ENCODE measurements at regions of chr5 and their contacts with region 1.

Region 1: GRCh38 chr5:79133657-79134451 is 22.2 kb downstream of the BHMT start:
- DNase-seq: peak; percentile 76
- ATAC-seq: peak; percentile 79
- H3K4me3 Mint-ChIP-seq: peak overlapping the region; percentile 73
- H3K27ac Mint-ChIP-seq: peak overlapping the region; percentile 94
- H3K4me1 Mint-ChIP-seq: peaks cover 23% of the 10 kb centered on the region
- H3K27me3 Mint-ChIP-seq: no peaks in the 10 kb centered on the region
- CTCF ChIP-seq: peak; percentile 24; the same call in 1 of the 2 replicates

Region 2: DNA sequence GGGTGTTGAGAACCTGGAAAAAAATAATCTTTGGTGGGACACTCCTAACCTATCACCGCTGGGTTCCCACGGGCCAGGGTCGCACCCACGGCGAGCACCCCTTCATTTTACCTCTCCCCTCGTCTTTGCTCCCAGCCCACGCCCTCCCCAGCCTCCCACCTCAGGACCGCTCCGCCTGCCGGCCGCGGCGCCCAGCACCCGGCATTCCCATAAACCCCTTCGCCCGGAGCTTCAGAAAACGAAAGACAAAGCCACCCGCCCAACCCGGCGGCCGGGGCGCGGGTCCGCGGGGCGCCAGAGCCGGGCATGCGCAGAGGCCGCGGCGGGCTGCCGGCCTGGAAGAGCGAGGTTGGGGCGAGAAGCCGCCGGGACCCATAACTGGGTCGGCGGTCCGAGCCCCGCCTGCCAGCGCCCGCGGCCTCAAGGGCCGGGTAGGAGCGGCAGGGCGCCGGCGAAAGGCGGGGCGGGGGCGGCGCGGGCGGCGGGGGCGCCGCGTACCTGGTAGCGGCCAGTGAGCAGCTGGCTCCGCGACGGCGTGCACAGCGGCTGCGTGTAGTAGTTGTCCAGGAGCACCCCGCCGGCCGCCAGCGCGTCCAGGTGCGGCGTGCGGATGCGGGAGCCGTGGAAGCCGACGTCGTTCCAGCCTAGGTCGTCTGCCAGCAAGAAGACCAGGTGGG is 149.3 kb before region 1 on chr5:
- CTCF ChIA-PET with region 1: interaction called, 11 read pairs
- POLR2A ChIA-PET with region 1: no interaction called
- DNase-seq: peak; percentile 84
- ATAC-seq: peak; percentile 92
- H3K4me3 Mint-ChIP-seq: peak overlapping the region; percentile 75
- H3K27ac Mint-ChIP-seq: peak overlapping the region; percentile 92; the same call in 1 of the 2 replicates
- H3K4me1 Mint-ChIP-seq: peaks cover 28% of the 10 kb centered on the region
- H3K27me3 Mint-ChIP-seq: peaks cover 10% of the 10 kb centered on the region
- CTCF ChIP-seq: no peak

Region 3: GRCh38 chr5:79001471-79001870 is 132.4 kb before region 1 on chr5:
- CTCF ChIA-PET with region 1: no interaction called
- POLR2A ChIA-PET with region 1: no interaction called
- DNase-seq: no peak
- ATAC-seq: no peak
- H3K4me3 Mint-ChIP-seq: no peak overlapping the region
- H3K27ac Mint-ChIP-seq: no peak overlapping the region
- H3K4me1 Mint-ChIP-seq: no peaks in the 10 kb centered on the region
- H3K27me3 Mint-ChIP-seq: no peaks in the 10 kb centered on the region
- CTCF ChIP-seq: no peak

Region 4: GRCh38 chr5:79030663-79031484 is 103.0 kb before region 1 on chr5:
- CTCF ChIA-PET with region 1: interaction called, 358 read pairs
- POLR2A ChIA-PET with region 1: no interaction called
- DNase-seq: no peak
- ATAC-seq: no peak
- H3K4me3 Mint-ChIP-seq: no peak overlapping the region
- H3K27ac Mint-ChIP-seq: no peak overlapping the region
- H3K4me1 Mint-ChIP-seq: no peaks in the 10 kb centered on the region
- H3K27me3 Mint-ChIP-seq: no peaks in the 10 kb centered on the region; the same call in 1 of the 2 replicates
- CTCF ChIP-seq: no peak

Region 5: DNA sequence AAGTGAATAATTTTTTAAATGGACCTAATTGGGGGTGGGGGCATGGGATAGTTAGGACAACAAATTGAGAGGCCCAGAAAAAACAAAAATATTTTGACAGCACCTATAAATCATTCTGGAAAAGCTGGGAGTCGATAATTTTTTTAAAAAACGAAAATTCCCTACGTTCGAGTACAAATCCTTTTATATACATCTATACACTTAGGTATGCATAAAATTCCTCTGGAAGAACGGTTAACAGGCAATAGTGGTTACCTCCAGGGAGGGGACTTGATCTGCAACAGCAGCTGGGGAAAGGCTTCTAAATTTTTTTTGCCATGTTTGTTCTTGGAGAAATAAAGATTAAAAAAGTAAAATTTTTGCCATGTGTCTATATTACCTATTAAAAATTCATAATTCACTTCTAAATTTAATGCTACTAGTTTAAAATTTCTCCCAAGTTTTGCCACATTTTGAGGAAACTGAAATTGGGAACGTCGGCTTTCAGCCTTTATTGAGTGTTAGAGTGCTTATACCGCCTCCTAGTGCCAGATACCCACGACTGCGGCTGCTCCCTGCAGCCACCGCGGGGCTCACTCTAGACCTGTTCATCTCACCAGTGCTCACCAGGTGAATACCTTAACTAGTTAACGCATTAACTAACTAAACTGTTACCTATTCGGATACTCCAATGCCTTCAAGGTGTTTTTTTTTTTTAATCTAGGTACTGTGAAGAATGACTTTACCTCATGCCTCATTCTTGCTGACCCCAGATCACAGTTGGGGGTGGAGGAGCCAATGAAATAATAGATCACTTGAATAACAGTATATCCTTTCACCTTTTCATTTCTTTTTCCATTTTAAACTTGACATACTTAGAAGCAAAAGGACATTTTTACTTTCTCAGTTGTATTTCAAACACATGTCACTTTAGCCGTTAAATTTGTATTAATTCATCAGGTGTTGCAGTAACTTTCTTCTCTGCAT is 24.0 kb before region 1 on chr5:
- CTCF ChIA-PET with region 1: interaction called, 15 read pairs
- POLR2A ChIA-PET with region 1: no interaction called
- DNase-seq: peak; percentile 64
- ATAC-seq: peak; percentile 71
- H3K4me3 Mint-ChIP-seq: no peak overlapping the region
- H3K27ac Mint-ChIP-seq: no peak overlapping the region
- H3K4me1 Mint-ChIP-seq: peaks cover 8% of the 10 kb centered on the region; the same call in 1 of the 2 replicates
- H3K27me3 Mint-ChIP-seq: peaks cover 47% of the 10 kb centered on the region
- CTCF ChIP-seq: peak; percentile 52; the same call in 1 of the 2 replicates

Region 6: DNA sequence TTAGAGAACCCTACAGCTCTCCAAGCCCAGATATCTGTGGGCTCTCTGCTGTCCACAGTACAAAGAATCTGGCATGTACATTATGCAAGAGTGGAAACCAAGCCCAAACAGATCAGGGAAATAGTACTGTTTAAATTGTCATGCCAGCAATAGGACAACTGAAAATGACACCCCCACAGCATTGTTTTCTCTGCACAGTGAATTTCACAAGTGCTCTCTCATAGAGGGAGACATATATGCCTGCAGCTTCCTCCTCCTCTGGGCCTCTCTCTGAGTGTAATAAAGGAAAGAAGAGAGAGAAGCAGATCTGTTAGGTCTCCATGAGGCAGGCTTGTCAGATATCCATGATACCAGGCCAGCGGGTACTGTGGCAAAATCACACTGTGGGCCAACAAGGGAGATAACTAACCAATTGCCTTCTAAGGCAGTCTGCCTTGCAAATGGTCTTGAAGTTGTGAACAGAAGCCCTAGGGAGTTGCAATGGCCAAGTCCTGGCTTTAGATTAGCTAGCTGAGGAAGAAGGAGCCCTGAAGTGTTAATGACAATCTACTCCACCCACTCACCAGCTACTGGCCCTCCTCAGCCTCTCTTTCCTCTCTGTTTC is 47.7 kb after region 1 on chr5:
- CTCF ChIA-PET with region 1: interaction called, 10 read pairs
- POLR2A ChIA-PET with region 1: no interaction called
- DNase-seq: no peak
- ATAC-seq: peak; percentile 65
- H3K4me3 Mint-ChIP-seq: no peak overlapping the region
- H3K27ac Mint-ChIP-seq: no peak overlapping the region
- H3K4me1 Mint-ChIP-seq: peaks cover 8% of the 10 kb centered on the region; the same call in 1 of the 2 replicates
- H3K27me3 Mint-ChIP-seq: no peaks in the 10 kb centered on the region
- CTCF ChIP-seq: no peak

Region 7: GRCh38 chr5:79255786-79256557 is 122.1 kb after region 1 on chr5:
- CTCF ChIA-PET with region 1: interaction called, 10 read pairs
- POLR2A ChIA-PET with region 1: no interaction called
- DNase-seq: peak; percentile 75
- ATAC-seq: peak; percentile 93
- H3K4me3 Mint-ChIP-seq: no peak overlapping the region
- H3K27ac Mint-ChIP-seq: peak overlapping the region; percentile 75; the same call in 1 of the 2 replicates
- H3K4me1 Mint-ChIP-seq: peaks cover 48% of the 10 kb centered on the region
- H3K27me3 Mint-ChIP-seq: no peaks in the 10 kb centered on the region
- CTCF ChIP-seq: peak; percentile 40; the same call in 1 of the 2 replicates

Measured in WTC11 (cell line).